ENCODE measurements at regions of chr1 and their contacts with region 1.

Region 1: GRCh38 chr1:156154317-156154749 is 948 bp downstream of the SEMA4A start:
- DNase-seq: peak; percentile 88
- H3K4me3 ChIP-seq: peak overlapping the region; percentile 78
- H3K27ac ChIP-seq: peak overlapping the region; percentile 95
- H3K4me1 ChIP-seq: peaks cover 77% of the 10 kb centered on the region
- CTCF ChIP-seq: no peak

Region 2: GRCh38 chr1:154371436-154371835 is 1782.9 kb before region 1 on chr1:
- CTCF ChIA-PET with region 1: no interaction called
- POLR2A ChIA-PET with region 1: no interaction called
- intact Hi-C with region 1: no loop called
- DNase-seq: no peak
- H3K4me3 ChIP-seq: no peak overlapping the region
- H3K27ac ChIP-seq: no peak overlapping the region
- H3K4me1 ChIP-seq: no peaks in the 10 kb centered on the region
- CTCF ChIP-seq: no peak

Region 3: GRCh38 chr1:156193488-156194299 is 39.4 kb after region 1 on chr1 and contains the start of gene SLC25A44:
- CTCF ChIA-PET with region 1: no interaction called
- POLR2A ChIA-PET with region 1: interaction called, 8 read pairs
- intact Hi-C with region 1: loop called (anchors 1 kb)
- DNase-seq: peak; percentile 99
- H3K4me3 ChIP-seq: peak within 1 kb of the TSS; percentile 80
- H3K27ac ChIP-seq: peak within 1 kb of the TSS; percentile 52
- H3K4me1 ChIP-seq: peaks cover 24% of the 10 kb centered on the region
- CTCF ChIP-seq: peak; percentile 56
- total RNA-seq, gene SLC25A44: 8.5 and 11.0 TPM in 2 replicates

Region 4: DNA sequence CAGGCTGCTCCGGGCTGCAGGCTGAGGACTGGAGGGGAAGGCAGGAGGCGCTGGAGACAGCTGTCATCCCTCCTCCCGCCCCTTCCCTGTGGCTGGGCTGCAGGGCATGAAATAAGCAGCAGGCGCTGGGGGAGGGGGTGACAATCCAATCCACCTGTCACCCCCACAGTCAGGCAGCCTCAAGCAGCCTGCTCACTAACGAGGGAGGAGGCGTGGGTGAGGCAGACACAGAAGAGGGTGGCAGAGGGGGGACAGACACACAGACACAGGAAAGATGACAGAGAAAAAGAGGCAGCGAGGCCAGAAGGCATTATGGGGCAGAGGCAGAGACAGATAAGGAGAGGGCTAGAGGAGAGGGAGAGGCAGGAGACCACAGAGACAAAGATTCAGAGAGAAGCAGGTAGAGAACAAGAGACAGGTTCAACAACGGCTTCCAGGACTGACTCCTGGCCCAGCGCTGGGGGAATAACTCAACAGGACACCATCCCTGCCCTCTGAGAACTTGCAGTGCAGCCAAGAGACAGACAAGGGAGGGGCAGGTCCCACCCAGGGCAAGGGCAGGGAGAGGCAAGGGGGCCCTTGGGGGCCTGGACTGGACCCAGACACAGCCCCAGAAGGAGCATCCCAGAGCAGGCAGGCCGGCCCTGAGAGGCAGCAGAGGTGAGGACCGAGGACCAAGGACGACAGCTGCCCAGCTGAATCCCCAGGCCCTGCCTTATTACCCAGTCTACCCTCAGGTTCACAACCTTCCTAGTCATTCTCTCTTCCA is 335.0 kb after region 1 on chr1:
- CTCF ChIA-PET with region 1: no interaction called
- POLR2A ChIA-PET with region 1: no interaction called
- intact Hi-C with region 1: loop called (anchors 5 kb)
- DNase-seq: peak; percentile 67
- H3K4me3 ChIP-seq: peak overlapping the region; percentile 98
- H3K27ac ChIP-seq: peak overlapping the region; percentile 98
- H3K4me1 ChIP-seq: peaks cover 93% of the 10 kb centered on the region
- CTCF ChIP-seq: no peak; the same call in 1 of the 2 replicates

Measured in OCI-LY7 (cell line).